Activated T-helper 2 cell treated with anti-CD3 and anti-CD28 coated beads, Interferon-gamma antibody, Interleukin-2, Interleukin-4, amounts not matched to agents 10 μg/mL and 5 μg/mL and 100 μg/mL, durations not matched to agents 14 hours and 24 hours and 36 hours (primary cell): ENCODE measurements at regions of chr6 and their contacts with region 1.

Region 1: GRCh38 chr6:27188885-27189418 is 58.5 kb upstream of the PRSS16 start:
- DNase-seq: peak; percentile 45
- H3K4me3 Mint-ChIP-seq: peak overlapping the region; percentile 94
- H3K27ac Mint-ChIP-seq: peak overlapping the region; percentile 70
- H3K4me1 Mint-ChIP-seq: peaks cover 13% of the 10 kb centered on the region
- H3K27me3 Mint-ChIP-seq: peaks cover 3% of the 10 kb centered on the region

Region 2: DNA sequence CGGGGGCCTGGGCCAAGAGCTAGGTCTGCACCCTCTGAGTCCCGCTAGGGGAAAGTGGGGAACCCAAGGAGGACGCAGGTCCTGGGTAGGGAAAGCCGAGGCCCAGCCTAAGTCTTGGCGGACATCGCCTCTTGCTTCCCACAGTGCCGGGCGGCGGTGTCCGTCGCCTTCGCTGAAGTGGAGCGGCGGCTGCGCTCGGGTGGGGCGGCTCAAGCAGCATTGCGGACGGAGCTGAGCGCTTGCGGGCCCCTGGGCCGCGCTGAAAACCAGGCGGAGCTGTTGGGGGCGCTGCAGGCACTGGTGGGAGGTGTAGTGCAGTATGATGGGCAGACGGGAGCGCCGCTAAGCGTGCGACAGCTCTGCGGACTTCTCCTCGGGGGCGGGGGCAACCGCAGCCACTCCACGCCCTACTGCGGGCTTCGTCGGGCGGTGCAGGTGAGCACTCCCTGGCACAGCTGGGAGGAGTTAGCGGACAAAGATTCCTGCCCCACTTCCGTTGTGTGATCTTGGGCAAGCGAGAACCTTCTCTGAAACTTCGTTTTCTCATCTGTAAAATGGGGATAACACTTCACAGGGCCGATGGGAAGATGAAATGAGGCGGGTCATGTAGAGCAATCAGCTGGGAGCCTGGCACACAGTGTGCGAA is 62.8 kb after region 1 on chr6:
- intact Hi-C with region 1: loop called (anchors 2 kb)
- DNase-seq: peak; percentile 73
- H3K4me3 Mint-ChIP-seq: peak overlapping the region; percentile 90
- H3K27ac Mint-ChIP-seq: no peak overlapping the region
- H3K4me1 Mint-ChIP-seq: peaks cover 3% of the 10 kb centered on the region
- H3K27me3 Mint-ChIP-seq: peaks cover 58% of the 10 kb centered on the region

Region 3: DNA sequence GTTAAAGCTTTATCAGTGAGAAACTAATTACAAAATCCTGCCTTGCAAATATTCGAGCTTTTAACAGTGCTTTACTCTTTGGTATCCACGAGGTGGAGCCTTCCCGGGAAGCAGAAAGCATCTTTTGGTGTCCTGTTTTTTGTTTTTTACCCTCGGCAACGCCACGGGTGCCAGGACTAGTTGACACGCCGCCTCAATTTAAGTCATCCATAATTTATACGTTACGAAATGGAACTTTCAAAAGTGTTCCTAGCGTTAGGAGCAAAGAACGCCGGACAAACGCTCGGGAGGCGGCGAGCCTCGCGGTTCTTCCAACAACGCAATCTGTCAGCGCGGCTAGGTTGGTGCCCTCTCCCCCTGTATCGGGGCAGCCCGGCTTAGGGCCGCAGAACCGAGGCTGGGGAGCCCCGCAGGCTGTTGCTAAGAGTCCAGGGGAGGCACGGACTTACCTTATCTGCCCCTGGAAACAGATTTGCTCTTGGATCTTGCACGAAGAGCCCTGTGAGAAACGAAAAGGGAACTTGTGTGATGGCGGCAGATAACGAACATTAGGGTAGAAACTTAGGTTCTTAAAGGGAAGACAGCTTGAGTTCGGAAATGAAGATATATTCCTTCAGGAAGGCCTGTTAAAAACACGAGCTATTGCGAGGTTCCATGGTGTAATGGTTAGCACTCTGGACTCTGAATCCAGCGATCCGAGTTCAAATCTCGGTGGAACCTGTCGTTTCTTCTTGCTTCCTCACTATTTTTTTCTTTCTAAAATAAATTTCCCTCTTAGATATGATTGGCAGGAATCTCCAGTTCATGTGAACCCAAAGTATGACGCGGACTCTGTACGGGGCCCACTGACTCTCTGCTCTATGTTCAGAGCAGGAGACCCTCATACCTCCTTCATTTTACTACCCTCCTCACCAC is 330.2 kb after region 1 on chr6:
- intact Hi-C with region 1: loop called (anchors 2 kb)
- DNase-seq: peak; percentile 30
- H3K4me3 Mint-ChIP-seq: peak overlapping the region; percentile 79
- H3K27ac Mint-ChIP-seq: peak overlapping the region; percentile 62
- H3K4me1 Mint-ChIP-seq: peaks cover 11% of the 10 kb centered on the region
- H3K27me3 Mint-ChIP-seq: peaks cover 30% of the 10 kb centered on the region

Region 4: DNA sequence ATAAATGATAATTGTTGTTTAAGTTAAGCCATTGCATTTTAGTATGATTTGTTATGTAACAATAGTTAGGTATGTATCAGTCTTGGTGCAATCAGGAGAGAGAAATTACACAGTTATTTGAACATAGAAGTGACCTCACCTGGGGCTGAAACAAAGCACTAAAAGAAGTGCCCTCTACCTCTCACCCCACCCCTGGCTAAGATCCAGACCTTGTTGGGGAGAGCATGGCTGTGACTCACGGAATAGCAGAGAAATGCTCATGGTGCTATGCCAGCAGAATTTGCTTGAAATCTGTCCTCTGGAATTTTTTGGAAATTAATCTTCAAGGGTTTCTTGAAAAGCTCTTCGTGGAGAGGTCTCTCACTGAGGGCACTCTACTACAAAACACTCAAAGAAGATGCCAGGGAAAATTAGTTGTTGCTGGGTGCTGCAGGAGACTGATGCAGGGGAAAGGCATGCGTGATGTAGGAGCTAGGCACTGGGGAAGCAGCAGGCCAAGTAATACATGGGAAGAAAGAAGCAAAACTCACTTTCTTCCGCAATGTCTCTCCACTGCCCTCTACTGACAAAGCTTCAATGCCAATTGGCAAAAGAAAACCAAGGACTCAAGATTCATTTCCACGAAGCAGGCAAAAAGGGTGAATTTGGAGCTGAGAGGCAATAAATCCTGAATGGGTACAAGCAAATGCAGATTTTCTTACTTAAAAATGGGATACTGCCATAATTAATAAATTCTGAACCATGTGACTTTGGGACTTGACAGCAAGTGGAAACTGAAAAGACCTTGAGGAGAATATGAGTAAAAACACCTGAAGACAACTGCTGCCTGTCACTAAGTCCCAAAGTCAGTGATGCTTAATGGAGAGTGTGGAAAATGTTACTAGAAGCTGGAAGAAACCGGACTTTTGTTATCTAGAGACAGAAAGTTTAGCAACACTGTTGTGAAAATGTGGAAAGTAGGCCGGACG is 420.2 kb after region 1 on chr6:
- intact Hi-C with region 1: loop called (anchors 2 kb)
- DNase-seq: no peak
- H3K4me3 Mint-ChIP-seq: no peak overlapping the region
- H3K27ac Mint-ChIP-seq: no peak overlapping the region
- H3K4me1 Mint-ChIP-seq: peaks cover 20% of the 10 kb centered on the region
- H3K27me3 Mint-ChIP-seq: peaks cover 36% of the 10 kb centered on the region